ENCODE measurements at regions of chr9 and their contacts with region 1.

Region 1: DNA sequence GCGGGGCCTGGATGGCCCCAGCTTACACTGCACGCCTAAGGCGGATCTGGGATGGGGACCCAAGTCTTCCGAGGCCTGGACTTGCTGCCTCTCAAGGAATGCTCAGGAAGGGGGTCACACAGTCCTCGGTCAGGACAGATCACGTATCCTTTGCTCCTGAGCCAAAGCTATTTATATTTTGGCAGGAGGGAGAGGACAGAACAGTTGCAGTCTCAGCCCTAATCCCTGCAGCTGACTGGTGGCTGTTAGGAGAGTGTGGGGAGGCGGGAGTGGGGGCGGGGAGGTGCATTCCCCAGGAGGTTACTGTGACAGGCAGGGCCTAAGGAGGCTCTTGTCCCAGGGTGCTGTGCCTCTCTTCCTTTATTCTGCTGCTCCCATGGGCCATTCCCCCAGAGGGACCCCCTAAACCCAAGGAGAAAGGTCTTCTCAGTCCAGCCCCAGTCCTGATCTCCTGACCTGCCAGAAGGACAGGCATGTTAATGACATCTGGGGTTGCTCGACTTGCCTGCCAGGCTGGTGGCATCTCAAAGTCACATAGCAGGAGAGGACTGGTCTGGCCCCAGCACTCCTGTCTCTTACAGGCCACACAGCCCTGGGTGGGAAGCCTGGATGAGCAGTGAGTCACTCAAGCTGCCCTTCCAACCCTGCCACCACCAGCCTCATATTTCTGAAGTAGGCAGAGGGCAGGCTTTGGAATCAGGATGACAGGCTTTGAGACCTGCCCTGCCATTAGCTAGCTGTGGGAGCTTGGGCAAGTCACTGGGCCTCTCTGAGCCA is 51.9 kb downstream of the COL27A1 start:
- DNase-seq: peak in 3 of 10 donors; percentile 38 to 89 (median 86)

Region 2: DNA sequence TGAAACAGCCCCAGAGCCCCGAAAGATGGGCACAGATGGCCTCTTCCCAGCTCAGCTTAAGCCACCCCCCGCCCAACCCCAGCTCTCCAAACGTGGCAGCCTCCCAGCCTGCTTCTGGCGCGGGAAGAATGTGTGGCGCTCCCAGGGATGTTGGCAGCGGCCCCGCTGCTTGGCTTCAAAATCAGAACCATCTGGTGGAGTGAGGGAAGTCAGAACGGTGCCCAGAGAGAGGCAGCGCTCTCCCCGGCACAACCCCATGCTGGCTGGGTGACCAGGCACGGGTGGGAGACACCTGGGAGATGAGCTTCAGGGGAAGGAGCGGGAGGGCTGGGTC is 43.0 kb after region 1 on chr9:
- intact Hi-C with region 1: loop called (anchors 5 kb)
- DNase-seq: peak; percentile 76 to 98 (median 88)